A549 (cell line): ENCODE measurements at regions of chr17 and their contacts with region 1.

Region 1: GRCh38 chr17:36534840-36535668 is at the starts of genes MYO19 and PIGW:
- DNase-seq: peak; percentile 91 to 96
- ATAC-seq: peak; percentile 88 to 93
- H3K4me3 ChIP-seq: peak within 1 kb of the TSS; percentile 67
- H3K27ac ChIP-seq: peak within 1 kb of the TSS; percentile 91 to 95
- H3K4me1 ChIP-seq: peaks cover 9% of the 10 kb centered on the region; the same call in 2 of the 3 replicates
- CTCF ChIP-seq: no peak
- EP300 ChIP-seq: no peak
- POLR2A ChIP-seq: peak; percentile 90
- RAD21 ChIP-seq: no peak
- polyA plus RNA-seq, gene MYO19: 99.0 and 124 TPM in 2 replicates
- polyA plus RNA-seq, gene PIGW: 26.1 and 30.0 TPM in 2 replicates

Region 2: GRCh38 chr17:36463916-36464315 is 71.1 kb before region 1 on chr17:
- CTCF ChIA-PET with region 1: no interaction called
- POLR2A ChIA-PET with region 1: no interaction called
- DNase-seq: peak; percentile 74 to 76
- ATAC-seq: peak; percentile 82 to 91
- H3K4me3 ChIP-seq: no peak overlapping the region
- H3K27ac ChIP-seq: no peak overlapping the region
- H3K4me1 ChIP-seq: no peaks in the 10 kb centered on the region
- CTCF ChIP-seq: no peak
- EP300 ChIP-seq: no peak
- POLR2A ChIP-seq: no peak
- RAD21 ChIP-seq: no peak

Region 3: DNA sequence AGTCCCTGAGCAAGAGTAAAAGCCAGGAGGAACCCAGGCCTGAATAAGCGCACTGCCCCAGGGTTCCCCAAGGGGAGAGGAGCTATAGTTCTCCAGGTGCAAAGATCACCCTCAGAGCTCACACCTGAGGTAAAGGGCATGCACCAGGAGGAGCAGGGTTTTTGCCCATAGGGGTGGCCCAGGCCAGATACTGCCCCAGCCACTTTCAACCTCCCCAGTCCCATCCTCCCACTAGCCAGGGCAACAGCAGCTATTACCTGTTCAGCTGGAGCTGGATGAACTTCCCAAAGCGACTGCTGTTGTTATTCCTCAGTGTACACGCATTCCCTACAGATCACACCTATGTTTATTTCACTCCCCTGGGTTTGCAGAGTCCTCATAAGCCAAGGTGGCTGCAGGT is 20.2 kb before region 1 on chr17:
- CTCF ChIA-PET with region 1: interaction called, 14 read pairs
- POLR2A ChIA-PET with region 1: interaction called, 5 read pairs
- DNase-seq: no peak
- ATAC-seq: no peak; a peak in 1 of 6 replicates
- H3K4me3 ChIP-seq: no peak overlapping the region
- H3K27ac ChIP-seq: no peak overlapping the region
- H3K4me1 ChIP-seq: no peaks in the 10 kb centered on the region
- CTCF ChIP-seq: no peak
- EP300 ChIP-seq: no peak
- POLR2A ChIP-seq: no peak
- RAD21 ChIP-seq: no peak

Region 4: GRCh38 chr17:36524428-36524876 is 10.6 kb before region 1 on chr17:
- CTCF ChIA-PET with region 1: interaction called, 16 read pairs
- POLR2A ChIA-PET with region 1: interaction called, 3 read pairs
- DNase-seq: no peak
- ATAC-seq: peak; percentile 15 to 41; a peak in 3 of 6 replicates
- H3K4me3 ChIP-seq: no peak overlapping the region
- H3K27ac ChIP-seq: no peak overlapping the region
- H3K4me1 ChIP-seq: peaks cover 6% of the 10 kb centered on the region; the same call in 1 of the 3 replicates
- CTCF ChIP-seq: no peak
- EP300 ChIP-seq: no peak
- POLR2A ChIP-seq: no peak
- RAD21 ChIP-seq: no peak

Region 5: DNA sequence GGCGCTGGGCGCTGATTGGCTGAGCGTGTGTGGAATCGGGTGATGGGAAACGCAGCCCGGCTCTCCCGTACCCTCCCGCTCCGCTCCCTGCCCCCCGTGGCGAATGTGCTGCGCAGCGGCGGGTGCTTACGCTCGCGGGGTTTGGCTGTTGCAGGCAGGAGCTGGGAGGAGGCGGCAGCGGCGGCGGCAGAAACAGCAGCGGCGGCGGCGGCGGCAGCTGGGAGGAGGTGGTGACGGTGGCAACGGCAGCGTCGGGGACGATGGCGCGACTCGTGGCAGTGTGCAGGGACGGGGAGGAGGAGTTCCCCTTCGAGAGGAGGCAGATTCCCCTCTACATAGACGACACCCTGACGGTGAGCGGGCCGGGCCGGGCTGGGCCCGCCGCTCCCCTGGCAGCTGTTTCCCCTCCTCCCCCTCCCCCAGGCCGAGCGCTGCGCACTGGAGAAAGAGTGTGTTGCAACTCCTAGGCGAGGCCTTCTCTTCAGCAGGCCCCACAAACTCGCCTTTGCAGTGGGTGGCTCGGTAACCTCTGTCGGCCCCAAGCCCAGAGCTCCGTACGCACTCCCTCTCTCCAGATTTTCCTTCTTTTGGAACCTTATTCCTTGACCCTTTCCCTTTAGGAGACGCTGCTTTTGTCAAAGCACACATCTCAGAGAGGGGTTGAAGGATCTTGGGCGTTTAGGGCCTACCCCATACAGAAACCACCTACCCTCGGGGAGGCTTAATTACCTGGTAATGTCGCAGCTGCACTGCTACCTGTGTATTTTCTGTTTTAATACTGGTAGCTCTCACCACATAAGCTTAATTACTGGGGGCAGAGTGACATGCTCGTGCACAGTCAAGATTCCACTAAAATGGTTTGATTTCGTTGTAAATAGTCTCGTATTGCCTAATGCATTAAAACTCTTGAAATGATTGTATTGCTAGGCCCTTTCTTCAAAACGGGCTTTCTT is 10.7 kb after region 1 on chr17:
- CTCF ChIA-PET with region 1: interaction called, 19 read pairs
- POLR2A ChIA-PET with region 1: interaction called, 81 read pairs
- DNase-seq: peak; percentile 98 to 99
- ATAC-seq: peak; percentile 83 to 89
- H3K4me3 ChIP-seq: peak overlapping the region; percentile 81
- H3K27ac ChIP-seq: peak overlapping the region; percentile 96 to 97
- H3K4me1 ChIP-seq: peaks cover 28% of the 10 kb centered on the region
- CTCF ChIP-seq: no peak
- EP300 ChIP-seq: no peak
- POLR2A ChIP-seq: peak; percentile 44
- RAD21 ChIP-seq: no peak